Activated CD4-positive, alpha-beta T cell treated with anti-CD3 and anti-CD28 coated beads for 36 hours (primary cell): ENCODE measurements at regions of chr1 and their contacts with region 1.

Region 1: GRCh38 chr1:247210376-247211117 is 38.7 kb upstream of the ZNF124 start:
- DNase-seq: peak; percentile 98
- ATAC-seq: peak; percentile 100
- H3K4me3 Mint-ChIP-seq: peak overlapping the region; percentile 89
- H3K27ac Mint-ChIP-seq: peak overlapping the region; percentile 91
- H3K4me1 Mint-ChIP-seq: peaks cover 60% of the 10 kb centered on the region
- H3K27me3 Mint-ChIP-seq: no peaks in the 10 kb centered on the region

Region 2: GRCh38 chr1:247078261-247079140 is 132.0 kb before region 1 on chr1 and contains the start of gene ZNF670:
- CTCF ChIA-PET with region 1: no interaction called
- POLR2A ChIA-PET with region 1: interaction called, 3 read pairs
- intact Hi-C with region 1: loop called (anchors 1 kb)
- DNase-seq: peak; percentile 97
- ATAC-seq: peak; percentile 100
- H3K4me3 Mint-ChIP-seq: peak within 1 kb of the TSS; percentile 89
- H3K27ac Mint-ChIP-seq: peak within 1 kb of the TSS; percentile 91
- H3K4me1 Mint-ChIP-seq: peaks cover 27% of the 10 kb centered on the region
- H3K27me3 Mint-ChIP-seq: peaks cover 5% of the 10 kb centered on the region
- total RNA-seq, gene ZNF670: 4.3 to 4.9 TPM

Region 3: DNA sequence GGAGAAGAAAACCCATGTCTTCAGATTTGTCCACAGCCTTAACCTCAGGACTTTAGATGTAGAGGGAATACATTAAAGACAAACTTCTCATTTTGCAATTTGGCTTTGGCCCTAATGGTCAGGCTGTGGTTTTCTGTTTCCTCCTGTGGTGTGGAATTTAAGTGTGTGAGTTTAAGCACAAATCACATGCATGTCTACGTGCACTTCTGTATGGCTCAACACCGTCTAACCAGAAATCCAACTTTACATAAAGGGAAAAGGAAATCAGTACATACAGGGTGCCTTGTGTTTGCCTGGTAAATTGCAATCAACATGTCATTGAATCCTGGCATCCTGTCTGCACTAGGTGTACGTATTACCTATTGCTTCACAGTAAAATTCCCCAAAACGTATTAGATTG is 37.6 kb before region 1 on chr1:
- CTCF ChIA-PET with region 1: no interaction called
- POLR2A ChIA-PET with region 1: no interaction called
- intact Hi-C with region 1: loop called in 1 of 2 experiments (anchors 2 kb)
- DNase-seq: no peak
- ATAC-seq: no peak
- H3K4me3 Mint-ChIP-seq: no peak overlapping the region
- H3K27ac Mint-ChIP-seq: no peak overlapping the region
- H3K4me1 Mint-ChIP-seq: peaks cover 10% of the 10 kb centered on the region
- H3K27me3 Mint-ChIP-seq: no peaks in the 10 kb centered on the region

Region 4: DNA sequence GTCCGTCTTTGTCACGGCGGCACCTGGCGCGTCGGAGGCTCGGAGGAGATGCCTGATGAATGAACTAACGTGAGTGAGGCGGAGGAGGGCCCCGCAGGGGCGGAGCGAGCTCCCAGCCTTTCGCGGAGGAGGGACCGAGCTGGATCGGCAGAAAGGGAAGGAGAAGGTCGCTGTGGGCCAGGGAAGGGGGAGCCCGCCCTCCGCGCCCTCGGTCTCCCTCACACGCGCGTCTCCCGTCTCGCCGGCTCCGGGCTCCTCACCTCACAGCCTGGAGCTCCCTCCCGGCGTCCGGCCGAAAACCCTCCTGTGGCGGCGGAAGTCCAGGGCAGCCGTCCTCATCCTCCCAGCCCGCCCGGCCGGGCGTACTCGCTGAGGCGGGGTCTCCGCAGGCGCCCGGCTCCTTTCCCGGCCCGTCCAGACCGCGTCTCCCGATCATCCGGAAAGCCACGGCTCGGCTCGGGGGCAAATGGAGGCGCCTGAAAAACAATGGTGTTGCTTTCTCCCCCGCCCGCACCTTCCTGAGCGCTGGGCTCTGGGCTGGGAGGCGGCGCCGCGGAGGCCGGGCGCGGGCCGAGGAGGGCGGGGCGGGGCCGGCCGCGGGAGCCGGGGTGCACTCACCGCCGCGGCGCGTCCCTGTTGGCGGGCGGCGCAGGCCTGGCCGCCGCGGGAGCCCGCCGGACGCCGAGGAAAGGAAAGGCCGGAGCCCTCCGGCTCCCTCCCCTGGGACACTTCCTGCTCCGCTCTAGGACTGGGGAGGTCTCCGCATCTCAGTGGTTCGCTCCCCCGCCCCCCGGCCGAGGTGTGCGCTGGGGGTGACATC is 120.8 kb after region 1 on chr1 and contains the start of gene ZNF496:
- CTCF ChIA-PET with region 1: no interaction called
- POLR2A ChIA-PET with region 1: no interaction called
- intact Hi-C with region 1: loop called (anchors 1 to 5 kb)
- DNase-seq: peak; percentile 86
- ATAC-seq: peak; percentile 82
- H3K4me3 Mint-ChIP-seq: peak within 1 kb of the TSS; percentile 78
- H3K27ac Mint-ChIP-seq: peak within 1 kb of the TSS; percentile 76
- H3K4me1 Mint-ChIP-seq: peaks cover 12% of the 10 kb centered on the region
- H3K27me3 Mint-ChIP-seq: no peaks in the 10 kb centered on the region
- total RNA-seq, gene ZNF496: 9.3 to 9.5 TPM